PC-3 (cell line): ENCODE measurements at regions of chr20 and their contacts with region 1.

Region 1: GRCh38 chr20:50680412-50680908 is 10.9 kb downstream of the RIPOR3 start:
- DNase-seq: no peak
- ATAC-seq: no peak
- H3K4me3 ChIP-seq: no peak overlapping the region
- H3K27ac ChIP-seq: no peak overlapping the region
- H3K4me1 ChIP-seq: peaks cover 6% of the 10 kb centered on the region; the same call in 1 of the 2 replicates
- H3K27me3 ChIP-seq: no peaks in the 10 kb centered on the region
- CTCF ChIP-seq: no peak

Region 2: GRCh38 chr20:50691573-50692551 is 11.4 kb after region 1 on chr20:
- CTCF ChIA-PET with region 1: no interaction called
- POLR2A ChIA-PET with region 1: interaction called, 22 read pairs
- intact Hi-C with region 1: no loop called
- DNase-seq: no peak
- ATAC-seq: no peak
- H3K4me3 ChIP-seq: no peak overlapping the region
- H3K27ac ChIP-seq: no peak overlapping the region
- H3K4me1 ChIP-seq: peaks cover 14% of the 10 kb centered on the region
- H3K27me3 ChIP-seq: no peaks in the 10 kb centered on the region
- CTCF ChIP-seq: no peak